ENCODE measurements at regions of chr2 and their contacts with region 1.

Region 1: DNA sequence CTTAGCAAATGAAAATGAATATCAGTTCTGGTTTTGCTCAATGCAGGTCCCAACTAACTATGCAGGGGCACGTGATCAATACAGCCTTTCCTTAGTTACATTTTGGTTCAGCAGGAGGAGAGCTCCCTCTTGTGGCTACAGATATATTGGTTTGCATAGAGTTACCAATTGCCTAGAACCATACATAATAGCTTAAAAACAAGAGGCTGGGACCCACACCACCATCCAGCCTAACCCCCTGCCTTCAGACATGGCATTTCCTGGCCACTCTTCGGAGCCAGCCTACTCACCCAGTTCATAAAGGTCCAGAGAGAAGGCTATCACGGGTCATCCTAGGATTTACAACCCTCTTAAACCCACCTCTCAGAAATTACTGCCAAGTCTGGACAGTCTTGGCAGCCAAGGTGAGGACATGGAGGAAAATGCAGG is 10.5 kb downstream of the CCDC93 start:
- DNase-seq: peak; percentile 63
- H3K4me3 Mint-ChIP-seq: no peak overlapping the region
- H3K27ac Mint-ChIP-seq: no peak overlapping the region
- H3K4me1 Mint-ChIP-seq: peaks cover 8% of the 10 kb centered on the region
- H3K27me3 Mint-ChIP-seq: no peaks in the 10 kb centered on the region

Region 2: GRCh38 chr2:117814417-117815264 is 188.8 kb before region 1 on chr2 and contains the start of gene DDX18:
- CTCF ChIA-PET with region 1: interaction called, 43 read pairs
- DNase-seq: peak; percentile 98
- H3K4me3 Mint-ChIP-seq: peak within 1 kb of the TSS; percentile 90
- H3K27ac Mint-ChIP-seq: peak within 1 kb of the TSS; percentile 97
- H3K4me1 Mint-ChIP-seq: peaks cover 36% of the 10 kb centered on the region
- H3K27me3 Mint-ChIP-seq: no peaks in the 10 kb centered on the region

Region 3: GRCh38 chr2:117835990-117836760 is 167.2 kb before region 1 on chr2:
- CTCF ChIA-PET with region 1: interaction called, 10 read pairs
- DNase-seq: peak; percentile 66
- H3K4me3 Mint-ChIP-seq: peak overlapping the region; percentile 48
- H3K27ac Mint-ChIP-seq: no peak overlapping the region
- H3K4me1 Mint-ChIP-seq: peaks cover 6% of the 10 kb centered on the region
- H3K27me3 Mint-ChIP-seq: peaks cover 4% of the 10 kb centered on the region

Region 4: GRCh38 chr2:117987121-117987520 is 16.3 kb before region 1 on chr2:
- CTCF ChIA-PET with region 1: interaction called, 33 read pairs
- DNase-seq: no peak
- H3K4me3 Mint-ChIP-seq: no peak overlapping the region
- H3K27ac Mint-ChIP-seq: no peak overlapping the region
- H3K4me1 Mint-ChIP-seq: no peaks in the 10 kb centered on the region
- H3K27me3 Mint-ChIP-seq: no peaks in the 10 kb centered on the region

Region 5: DNA sequence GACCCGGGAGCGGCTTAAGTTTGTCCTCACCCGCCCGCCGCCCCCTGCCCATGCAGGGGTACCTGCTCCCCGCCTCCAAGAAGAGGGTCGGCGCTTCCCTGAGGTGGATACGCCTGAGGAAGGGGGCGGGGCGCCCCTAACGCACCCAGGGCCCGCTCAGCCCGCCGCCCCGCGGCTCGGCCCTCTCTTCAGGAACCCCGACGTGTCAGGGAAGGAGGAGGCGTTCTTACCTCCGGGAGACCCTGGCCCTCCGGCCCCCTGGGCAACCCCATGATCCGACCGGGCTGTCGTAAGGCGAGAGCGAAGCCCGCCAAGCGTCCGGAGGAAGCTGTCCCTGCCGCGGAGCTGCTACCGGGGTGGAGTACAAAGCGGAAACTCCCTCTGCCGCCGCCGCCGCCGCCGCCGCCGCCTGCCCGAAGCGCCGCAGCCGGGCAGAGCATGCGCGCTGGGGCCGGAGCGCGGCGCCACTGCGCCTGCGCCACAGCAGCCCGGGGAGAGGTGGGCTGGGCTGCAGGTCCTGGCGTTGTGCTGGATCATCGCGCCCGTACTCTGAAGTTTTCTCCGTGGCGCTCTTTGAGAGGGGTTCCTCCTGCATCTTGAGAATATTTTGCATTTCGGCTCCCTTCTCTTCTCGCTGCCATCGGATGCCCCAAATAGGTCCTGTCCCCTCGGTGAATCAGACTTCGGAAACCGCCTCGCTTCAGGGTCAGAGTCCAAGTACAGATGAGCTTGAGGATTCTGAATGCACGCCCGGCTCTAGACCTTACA is 10.5 kb after region 1 on chr2 and contains the start of gene CCDC93:
- CTCF ChIA-PET with region 1: interaction called, 23 read pairs
- DNase-seq: peak; percentile 89
- H3K4me3 Mint-ChIP-seq: peak within 1 kb of the TSS; percentile 84
- H3K27ac Mint-ChIP-seq: peak within 1 kb of the TSS; percentile 87
- H3K4me1 Mint-ChIP-seq: peaks cover 45% of the 10 kb centered on the region
- H3K27me3 Mint-ChIP-seq: no peaks in the 10 kb centered on the region

Region 6: DNA sequence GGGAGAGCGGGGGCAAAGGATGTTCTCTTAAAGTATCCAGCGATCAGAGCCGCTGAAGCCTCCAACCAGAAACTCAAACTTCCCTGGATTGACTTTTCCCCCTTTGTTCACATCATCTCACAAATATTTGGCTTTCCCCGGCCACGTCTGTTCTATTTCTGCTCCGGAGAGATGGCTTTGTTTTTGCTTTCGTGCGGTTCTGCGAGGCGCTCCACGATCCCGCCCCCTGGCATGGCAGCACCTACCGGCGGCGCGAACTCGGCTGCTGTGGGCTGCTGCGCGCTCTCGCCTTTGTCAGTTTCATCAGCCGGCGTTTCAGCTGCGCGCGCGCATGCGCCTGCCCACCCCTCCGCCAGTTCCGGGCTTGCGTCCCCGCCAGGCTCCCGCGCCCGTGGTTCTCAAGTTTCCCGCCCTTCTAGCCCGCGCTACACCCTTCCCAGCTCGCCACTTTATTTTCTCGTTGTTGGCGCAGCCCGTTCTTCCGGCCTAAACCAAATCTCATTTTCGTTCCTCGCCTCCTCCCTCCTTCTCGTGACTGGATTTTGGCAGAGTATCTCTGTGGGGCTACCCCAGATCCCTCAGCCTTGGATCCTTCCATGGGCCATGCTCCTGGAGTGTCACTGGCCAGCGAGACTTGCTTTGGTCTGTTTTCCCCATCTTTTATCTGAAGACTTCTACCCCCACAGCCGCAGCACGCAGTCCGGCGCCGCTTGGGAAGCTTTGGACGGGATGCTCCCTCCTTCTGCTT is 182.9 kb after region 1 on chr2:
- CTCF ChIA-PET with region 1: no interaction called
- DNase-seq: peak; percentile 92
- H3K4me3 Mint-ChIP-seq: peak overlapping the region; percentile 85
- H3K27ac Mint-ChIP-seq: peak overlapping the region; percentile 94
- H3K4me1 Mint-ChIP-seq: peaks cover 23% of the 10 kb centered on the region
- H3K27me3 Mint-ChIP-seq: peaks cover 9% of the 10 kb centered on the region

Measured in activated naive CD4-positive, alpha-beta T cell treated with anti-CD3 and anti-CD28 coated beads, Interleukin-2, amount 10 ng/mL, durations not matched to agents 7 days and 5 days (primary cell).